ENCODE measurements at regions of chr1 and their contacts with region 1.

Region 1: GRCh38 chr1:93629099-93630059 is 52.3 kb downstream of the BCAR3 start:
- DNase-seq: peak in 1 of 2 experiments; percentile 40
- H3K4me3 ChIP-seq: no peak overlapping the region
- H3K4me3 Mint-ChIP-seq: no peak overlapping the region
- H3K27ac Mint-ChIP-seq: no peak overlapping the region
- H3K4me1 ChIP-seq: no peaks in the 10 kb centered on the region
- H3K4me1 Mint-ChIP-seq: peaks cover 6% of the 10 kb centered on the region
- H3K27me3 ChIP-seq: no peaks in the 10 kb centered on the region
- H3K27me3 Mint-ChIP-seq: no peaks in the 10 kb centered on the region
- CTCF ChIP-seq: peak; percentile 39 to 64

Region 2: DNA sequence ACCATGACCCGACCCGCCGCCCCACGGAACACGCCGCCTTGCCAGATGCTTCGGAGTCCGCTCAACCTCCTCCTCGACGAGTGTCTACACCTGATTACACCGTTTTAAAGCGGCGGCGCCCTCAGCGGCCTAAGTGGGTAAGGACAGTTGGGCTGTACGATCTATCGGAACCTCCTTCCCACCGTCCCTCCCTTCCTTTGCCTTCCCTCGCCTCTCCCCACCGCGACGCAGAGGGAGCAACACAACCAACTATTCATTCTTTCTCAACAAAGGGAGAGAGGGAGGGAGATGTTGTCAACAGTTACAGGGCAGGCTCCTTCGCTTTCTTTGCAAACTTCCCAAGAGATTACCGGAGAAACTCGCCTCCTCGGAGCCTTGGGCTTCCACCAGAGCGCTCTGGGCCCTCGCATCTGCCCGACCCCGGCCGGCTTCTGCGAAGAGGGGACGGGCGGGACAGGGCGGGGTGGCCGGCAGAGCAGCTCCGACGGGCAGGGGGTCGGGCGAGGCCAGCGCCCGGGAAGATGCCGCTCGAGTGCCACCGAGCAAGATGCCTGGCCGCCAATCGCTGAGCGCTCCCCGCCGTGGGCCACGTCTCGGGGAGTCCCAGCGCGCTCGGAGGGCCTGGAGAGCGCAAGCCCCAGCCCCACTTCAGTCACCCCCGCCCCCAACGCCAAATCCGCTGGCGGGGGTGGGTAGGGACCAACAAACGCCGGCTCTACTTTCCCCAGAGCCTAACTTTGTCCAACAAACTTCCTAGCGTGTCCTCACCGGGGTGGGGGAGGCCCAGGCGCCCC is 51.6 kb after region 1 on chr1:
- CTCF ChIA-PET with region 1: interaction called, 3 read pairs
- POLR2A ChIA-PET with region 1: no interaction called
- intact Hi-C with region 1: loop called (anchors 2 kb)
- DNase-seq: peak; percentile 65 to 74
- H3K4me3 ChIP-seq: peak overlapping the region; percentile 59
- H3K4me3 Mint-ChIP-seq: peak overlapping the region; percentile 91
- H3K27ac Mint-ChIP-seq: peak overlapping the region; percentile 50
- H3K4me1 ChIP-seq: peaks cover 15% of the 10 kb centered on the region
- H3K4me1 Mint-ChIP-seq: peaks cover 26% of the 10 kb centered on the region
- H3K27me3 ChIP-seq: no peaks in the 10 kb centered on the region
- H3K27me3 Mint-ChIP-seq: no peaks in the 10 kb centered on the region
- CTCF ChIP-seq: peak; percentile 24 to 35

Region 3: DNA sequence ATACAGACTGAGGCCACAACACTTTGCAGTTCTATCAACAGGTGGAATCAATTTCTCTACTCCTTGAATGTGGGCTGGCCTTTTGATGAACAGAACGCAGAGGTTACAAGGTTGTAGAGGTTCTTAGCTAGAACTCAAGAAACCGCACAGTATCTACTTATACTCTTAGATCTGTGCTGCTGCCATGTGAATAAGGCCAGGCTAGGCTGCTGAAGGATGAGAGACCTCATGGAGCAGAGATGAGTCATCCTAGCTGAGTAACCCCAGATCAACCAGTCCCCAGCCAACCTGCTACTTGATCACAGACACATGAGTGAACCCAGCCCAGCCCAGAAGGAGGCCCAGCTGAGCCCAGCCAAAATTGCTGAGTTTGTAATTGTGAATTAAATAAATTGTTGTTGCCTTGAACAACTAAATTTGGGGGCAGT is 87.6 kb after region 1 on chr1:
- CTCF ChIA-PET with region 1: no interaction called
- POLR2A ChIA-PET with region 1: no interaction called
- intact Hi-C with region 1: no loop called
- DNase-seq: no peak
- H3K4me3 ChIP-seq: no peak overlapping the region
- H3K4me3 Mint-ChIP-seq: no peak overlapping the region
- H3K27ac Mint-ChIP-seq: no peak overlapping the region
- H3K4me1 ChIP-seq: no peaks in the 10 kb centered on the region
- H3K4me1 Mint-ChIP-seq: peaks cover 12% of the 10 kb centered on the region
- H3K27me3 ChIP-seq: no peaks in the 10 kb centered on the region
- H3K27me3 Mint-ChIP-seq: no peaks in the 10 kb centered on the region
- CTCF ChIP-seq: no peak

Region 4: GRCh38 chr1:93734999-93735398 is 105.6 kb after region 1 on chr1:
- CTCF ChIA-PET with region 1: interaction called, 5 read pairs
- POLR2A ChIA-PET with region 1: no interaction called
- intact Hi-C with region 1: loop called (anchors 2 kb)
- DNase-seq: peak in 1 of 2 experiments; percentile 15
- H3K4me3 ChIP-seq: no peak overlapping the region
- H3K4me3 Mint-ChIP-seq: no peak overlapping the region
- H3K27ac Mint-ChIP-seq: no peak overlapping the region
- H3K4me1 ChIP-seq: no peaks in the 10 kb centered on the region
- H3K4me1 Mint-ChIP-seq: no peaks in the 10 kb centered on the region
- H3K27me3 ChIP-seq: no peaks in the 10 kb centered on the region
- H3K27me3 Mint-ChIP-seq: no peaks in the 10 kb centered on the region
- CTCF ChIP-seq: peak in 1 of 2 experiments; percentile 33

Region 5: GRCh38 chr1:93878889-93879586 is 249.7 kb after region 1 on chr1 and contains the start of gene DNTTIP2:
- CTCF ChIA-PET with region 1: interaction called, 4 read pairs
- POLR2A ChIA-PET with region 1: no interaction called
- intact Hi-C with region 1: loop called (anchors 1 kb)
- DNase-seq: peak; percentile 85 to 87
- H3K4me3 ChIP-seq: peak within 1 kb of the TSS; percentile 78
- H3K4me3 Mint-ChIP-seq: peak within 1 kb of the TSS; percentile 90
- H3K27ac Mint-ChIP-seq: peak within 1 kb of the TSS; percentile 99
- H3K4me1 ChIP-seq: no peaks in the 10 kb centered on the region
- H3K4me1 Mint-ChIP-seq: peaks cover 17% of the 10 kb centered on the region
- H3K27me3 ChIP-seq: no peaks in the 10 kb centered on the region
- H3K27me3 Mint-ChIP-seq: no peaks in the 10 kb centered on the region
- CTCF ChIP-seq: no peak
- total RNA-seq, gene DNTTIP2: 39.0 and 39.9 TPM in 2 replicates